Activated naive CD4-positive, alpha-beta T cell treated with anti-CD3 and anti-CD28 coated beads, Interleukin-2, amount 10 ng/mL, durations not matched to agents 7 days and 5 days (primary cell): ENCODE measurements at regions of chr14 and their contacts with region 1.

Region 1: GRCh38 chr14:54881235-54881760 is 21.3 kb downstream of the GCH1 start:
- DNase-seq: peak; percentile 52
- H3K4me3 Mint-ChIP-seq: peak overlapping the region; percentile 76
- H3K27ac Mint-ChIP-seq: peak overlapping the region; percentile 97
- H3K4me1 Mint-ChIP-seq: peaks cover 54% of the 10 kb centered on the region
- H3K27me3 Mint-ChIP-seq: no peaks in the 10 kb centered on the region

Region 2: DNA sequence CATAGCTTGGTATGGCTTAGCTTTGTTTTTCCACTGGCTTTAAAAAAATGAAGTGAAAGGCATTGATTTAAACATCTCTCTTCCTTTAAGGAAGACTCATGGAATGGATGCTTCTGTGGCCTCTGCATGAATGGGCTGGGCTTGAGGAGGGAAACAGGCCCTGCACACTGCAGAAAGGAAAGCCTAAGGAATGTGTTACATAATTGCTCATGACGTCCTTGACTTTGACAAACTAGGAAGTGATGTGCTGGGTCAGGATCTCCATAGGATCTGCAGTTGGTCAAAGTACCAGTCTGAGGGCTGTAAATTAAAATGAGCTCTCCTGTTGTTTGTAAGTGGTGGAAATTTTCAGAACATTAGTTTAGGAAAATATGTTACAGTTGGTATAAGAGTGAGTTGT is 301.7 kb before region 1 on chr14:
- CTCF ChIA-PET with region 1: no interaction called
- DNase-seq: no peak
- H3K4me3 Mint-ChIP-seq: no peak overlapping the region
- H3K27ac Mint-ChIP-seq: no peak overlapping the region
- H3K4me1 Mint-ChIP-seq: no peaks in the 10 kb centered on the region
- H3K27me3 Mint-ChIP-seq: peaks cover 3% of the 10 kb centered on the region

Region 3: DNA sequence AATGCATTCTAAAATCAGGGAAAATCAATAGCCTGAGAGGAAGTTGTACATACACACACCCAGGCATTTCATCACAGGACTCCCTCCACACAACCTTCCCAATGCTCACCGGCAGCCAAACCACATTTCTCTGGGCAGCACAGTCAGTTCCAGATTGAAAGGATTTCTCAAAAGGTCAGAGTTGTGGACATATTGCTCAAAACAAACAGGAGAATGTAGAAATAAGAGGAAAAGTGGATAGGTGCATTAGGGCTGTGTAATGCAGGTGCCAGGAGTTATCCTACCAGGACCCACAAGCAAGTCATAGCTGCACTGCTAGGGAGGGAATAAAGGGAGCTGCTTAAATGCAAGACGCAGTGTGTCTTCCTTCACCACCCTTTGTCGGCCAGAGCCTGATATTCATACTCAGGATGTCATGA is 41.6 kb before region 1 on chr14:
- CTCF ChIA-PET with region 1: no interaction called
- DNase-seq: no peak
- H3K4me3 Mint-ChIP-seq: no peak overlapping the region
- H3K27ac Mint-ChIP-seq: no peak overlapping the region
- H3K4me1 Mint-ChIP-seq: no peaks in the 10 kb centered on the region
- H3K27me3 Mint-ChIP-seq: no peaks in the 10 kb centered on the region

Region 4: GRCh38 chr14:54893151-54893760 is 12.0 kb after region 1 on chr14:
- CTCF ChIA-PET with region 1: interaction called, 13 read pairs
- DNase-seq: no peak
- H3K4me3 Mint-ChIP-seq: no peak overlapping the region
- H3K27ac Mint-ChIP-seq: no peak overlapping the region
- H3K4me1 Mint-ChIP-seq: peaks cover 49% of the 10 kb centered on the region
- H3K27me3 Mint-ChIP-seq: no peaks in the 10 kb centered on the region

Region 5: DNA sequence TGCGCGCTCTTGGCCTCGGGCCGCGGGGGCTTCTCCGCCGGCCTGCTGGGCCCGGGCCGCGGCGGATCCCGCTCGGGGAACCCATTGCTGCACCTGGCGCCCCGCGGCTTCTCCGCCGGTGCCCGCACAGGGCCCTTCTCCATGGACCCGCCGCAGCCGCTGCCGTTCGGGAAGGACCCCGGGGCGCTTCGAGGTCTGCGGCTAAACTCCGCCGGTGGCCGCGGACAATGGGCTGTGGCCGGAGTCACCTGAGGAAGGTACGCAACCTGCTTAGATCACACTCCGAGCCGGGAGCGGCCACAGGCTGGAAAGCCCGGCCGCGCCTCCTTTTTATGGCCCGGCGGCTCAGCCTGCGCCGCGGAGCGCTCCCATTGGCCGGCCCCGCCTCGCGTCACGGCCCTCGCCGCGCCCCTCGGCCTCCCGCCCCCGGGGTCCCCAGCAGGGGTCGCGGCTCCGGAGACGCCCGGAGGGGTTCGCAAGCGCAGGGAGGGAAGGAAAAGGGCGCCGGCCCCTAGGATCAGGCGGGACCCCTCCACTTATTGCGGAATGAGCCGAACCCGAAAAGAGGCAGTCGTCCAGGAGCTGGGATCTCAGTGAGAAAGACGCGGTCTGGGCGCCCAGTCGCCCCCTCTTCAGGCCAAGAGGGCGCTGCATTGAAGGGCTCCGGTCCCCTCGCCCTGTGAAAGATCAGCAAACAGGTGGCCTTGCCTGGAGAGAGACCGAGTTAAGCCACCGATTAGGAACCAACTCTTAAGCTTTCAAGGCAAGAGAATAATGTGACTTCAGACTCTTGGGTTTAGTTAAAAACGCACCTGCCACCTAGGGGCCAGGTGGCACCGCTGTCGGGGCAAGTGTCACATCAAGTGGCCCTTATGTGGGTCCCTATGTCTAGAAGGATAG is 21.5 kb after region 1 on chr14 and contains the start of gene GCH1:
- CTCF ChIA-PET with region 1: interaction called, 10 read pairs
- DNase-seq: peak; percentile 83
- H3K4me3 Mint-ChIP-seq: peak within 1 kb of the TSS; percentile 83
- H3K27ac Mint-ChIP-seq: peak within 1 kb of the TSS; percentile 94
- H3K4me1 Mint-ChIP-seq: peaks cover 51% of the 10 kb centered on the region
- H3K27me3 Mint-ChIP-seq: no peaks in the 10 kb centered on the region